ENCODE measurements at regions of chrX and their contacts with region 1.

Region 1: DNA sequence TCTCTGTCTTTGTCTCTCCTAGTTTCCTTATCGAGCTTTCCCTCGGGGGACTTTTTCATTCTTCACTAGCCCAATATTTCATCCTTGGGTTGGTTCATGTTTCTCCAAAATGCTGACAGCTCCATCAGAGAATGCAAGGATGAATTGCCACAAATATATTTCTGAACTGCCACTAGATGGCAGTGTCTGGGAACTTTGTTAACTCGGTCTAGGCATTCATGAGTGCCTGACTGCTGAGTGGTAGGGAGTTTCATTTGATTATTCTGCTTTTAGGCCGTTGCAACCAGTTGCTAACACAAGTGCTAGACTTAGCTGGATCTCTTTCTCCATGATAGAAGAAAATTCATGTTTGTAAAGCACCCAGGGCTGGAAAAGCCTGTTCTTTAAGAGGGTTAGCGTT is 73.5 kb upstream of the RAP2C start:
- DNase-seq: peak; percentile 29 to 46
- ATAC-seq: peak; percentile 70 to 80; a peak in 5 of 6 replicates
- H3K4me3 ChIP-seq: no peak overlapping the region
- H3K27ac ChIP-seq: no peak overlapping the region
- H3K4me1 ChIP-seq: no peaks in the 10 kb centered on the region
- CTCF ChIP-seq: peak; percentile 59
- EP300 ChIP-seq: no peak
- POLR2A ChIP-seq: no peak
- RAD21 ChIP-seq: peak; percentile 45 to 51; a peak in 4 of 5 replicates

Region 2: GRCh38 chrX:132277953-132278614 is 14.7 kb before region 1 on chrX:
- CTCF ChIA-PET with region 1: interaction called, 11 read pairs
- POLR2A ChIA-PET with region 1: no interaction called
- DNase-seq: no peak
- ATAC-seq: no peak
- H3K4me3 ChIP-seq: no peak overlapping the region
- H3K27ac ChIP-seq: no peak overlapping the region
- H3K4me1 ChIP-seq: no peaks in the 10 kb centered on the region
- CTCF ChIP-seq: no peak
- EP300 ChIP-seq: no peak
- POLR2A ChIP-seq: no peak
- RAD21 ChIP-seq: no peak

Region 3: GRCh38 chrX:132304599-132304998 is 11.8 kb after region 1 on chrX:
- CTCF ChIA-PET with region 1: interaction called, 14 read pairs
- POLR2A ChIA-PET with region 1: no interaction called
- DNase-seq: no peak
- ATAC-seq: no peak
- H3K4me3 ChIP-seq: no peak overlapping the region
- H3K27ac ChIP-seq: no peak overlapping the region
- H3K4me1 ChIP-seq: no peaks in the 10 kb centered on the region
- CTCF ChIP-seq: no peak
- EP300 ChIP-seq: no peak
- POLR2A ChIP-seq: no peak
- RAD21 ChIP-seq: no peak

Region 4: GRCh38 chrX:132615391-132616131 is 322.8 kb after region 1 on chrX:
- CTCF ChIA-PET with region 1: interaction called, 16 read pairs
- POLR2A ChIA-PET with region 1: no interaction called
- DNase-seq: peak in 1 of 2 experiments; percentile 26
- ATAC-seq: peak; percentile 39 to 72; a peak in 3 of 6 replicates
- H3K4me3 ChIP-seq: no peak overlapping the region
- H3K27ac ChIP-seq: no peak overlapping the region
- H3K4me1 ChIP-seq: no peaks in the 10 kb centered on the region
- CTCF ChIP-seq: peak; percentile 25; the same call in 1 of the 3 replicates
- EP300 ChIP-seq: no peak
- POLR2A ChIP-seq: no peak
- RAD21 ChIP-seq: no peak

Region 5: GRCh38 chrX:132631579-132632232 is 338.9 kb after region 1 on chrX:
- CTCF ChIA-PET with region 1: interaction called, 14 read pairs
- POLR2A ChIA-PET with region 1: no interaction called
- DNase-seq: peak; percentile 13 to 36
- ATAC-seq: peak; percentile 68 to 84; a peak in 4 of 6 replicates
- H3K4me3 ChIP-seq: no peak overlapping the region
- H3K27ac ChIP-seq: no peak overlapping the region
- H3K4me1 ChIP-seq: no peaks in the 10 kb centered on the region
- CTCF ChIP-seq: peak; percentile 54
- EP300 ChIP-seq: no peak
- POLR2A ChIP-seq: no peak
- RAD21 ChIP-seq: peak; percentile 53 to 58; a peak in 4 of 5 replicates

Measured in A549 (cell line).